ENCODE measurements at regions of chr6 and their contacts with region 1.

Region 1: GRCh38 chr6:24432611-24433010 is 29.9 kb downstream of the MRS2 start:
- DNase-seq: no peak
- H3K4me3 ChIP-seq: no peak overlapping the region
- H3K27ac ChIP-seq: no peak overlapping the region
- H3K4me1 ChIP-seq: no peaks in the 10 kb centered on the region
- H3K27me3 ChIP-seq: no peaks in the 10 kb centered on the region
- CTCF ChIP-seq: no peak
- POLR2A ChIP-seq: no peak

Region 2: DNA sequence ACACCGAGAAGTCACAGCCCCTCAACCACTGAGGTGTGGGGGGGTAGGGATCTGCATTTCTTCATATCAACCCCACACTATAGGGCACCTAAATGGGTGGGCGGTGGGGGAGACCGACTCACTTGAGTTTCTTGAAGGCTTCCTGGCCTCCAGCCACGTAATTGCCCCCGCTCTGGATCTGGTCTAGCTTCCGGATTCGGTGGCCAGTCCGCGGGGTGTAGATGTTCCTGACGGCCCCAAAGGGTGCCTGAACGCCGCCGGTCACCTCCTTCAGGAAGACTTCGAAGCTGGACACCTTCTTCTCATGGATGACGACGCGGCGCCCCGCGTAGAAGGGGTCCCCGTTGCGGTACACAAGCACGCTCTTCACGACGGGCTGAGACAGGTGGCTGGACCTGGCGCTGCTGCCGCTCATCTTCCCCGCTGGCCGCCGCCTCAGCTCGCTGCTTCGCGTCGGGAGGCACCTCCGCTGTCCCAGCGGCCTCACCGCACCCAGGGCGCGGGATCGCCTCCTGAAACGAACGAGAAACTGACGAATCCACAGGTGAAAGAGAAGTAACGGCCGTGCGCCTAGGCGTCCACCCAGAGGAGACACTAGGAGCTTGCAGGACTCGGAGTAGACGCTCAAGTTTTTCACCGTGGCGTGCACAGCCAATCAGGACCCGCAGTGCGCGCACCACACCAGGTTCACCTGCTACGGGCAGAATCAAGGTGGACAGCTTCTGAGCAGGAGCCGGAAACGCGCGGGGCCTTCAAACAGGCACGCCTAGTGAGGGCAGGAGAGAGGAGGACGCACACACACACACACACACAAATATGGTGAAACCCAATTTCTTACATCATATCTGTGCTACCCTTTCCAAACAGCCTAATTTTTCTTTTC is 75.0 kb before region 1 on chr6 and contains the start of gene DCDC2:
- intact Hi-C with region 1: no loop called
- DNase-seq: peak; percentile 77
- H3K4me3 ChIP-seq: peak within 1 kb of the TSS; percentile 6 to 24
- H3K27ac ChIP-seq: no peak within 1 kb of the TSS
- H3K4me1 ChIP-seq: peaks cover 4% of the 10 kb centered on the region
- H3K27me3 ChIP-seq: no peaks in the 10 kb centered on the region
- CTCF ChIP-seq: no peak
- POLR2A ChIP-seq: peak; percentile 33
- total RNA-seq, gene DCDC2: 0.34 to 2.5 TPM

Region 3: GRCh38 chr6:24458134-24458533 is 25.5 kb after region 1 on chr6:
- intact Hi-C with region 1: no loop called
- DNase-seq: no peak
- H3K4me3 ChIP-seq: no peak overlapping the region
- H3K27ac ChIP-seq: no peak overlapping the region
- H3K4me1 ChIP-seq: no peaks in the 10 kb centered on the region
- H3K27me3 ChIP-seq: no peaks in the 10 kb centered on the region
- CTCF ChIP-seq: no peak
- POLR2A ChIP-seq: no peak

Region 4: DNA sequence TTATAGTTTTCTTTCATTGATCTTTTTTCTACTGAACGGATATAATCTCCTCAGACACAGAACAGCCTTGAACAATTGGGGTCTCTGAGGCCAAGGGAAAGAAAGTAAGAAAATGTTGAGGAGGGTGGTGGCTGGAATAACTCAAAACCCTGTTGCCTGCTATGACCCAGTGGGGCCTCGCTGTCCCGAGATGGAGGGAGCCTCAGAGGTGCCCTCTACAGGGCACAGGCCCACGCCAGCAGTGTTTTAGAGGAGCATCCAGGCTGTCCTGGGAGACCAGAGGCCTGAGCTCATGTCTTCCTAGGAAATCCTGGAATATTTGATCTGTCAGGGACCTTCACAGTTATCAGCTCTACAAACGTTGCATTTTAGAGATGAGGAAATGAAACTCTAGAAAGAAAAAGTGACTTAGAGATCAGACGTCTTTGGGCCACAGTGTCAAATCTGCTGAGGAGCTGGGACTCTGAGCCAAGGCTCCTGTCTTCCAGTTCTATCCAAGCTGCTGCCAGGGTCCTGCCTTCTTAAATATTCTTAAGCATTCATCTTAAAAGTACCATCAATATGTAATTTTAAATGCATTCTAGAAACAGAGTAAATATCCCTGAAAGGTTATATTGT is 88.4 kb after region 1 on chr6:
- intact Hi-C with region 1: loop called (anchors 2 kb)
- DNase-seq: peak; percentile 26
- H3K4me3 ChIP-seq: no peak overlapping the region
- H3K27ac ChIP-seq: no peak overlapping the region
- H3K4me1 ChIP-seq: no peaks in the 10 kb centered on the region
- H3K27me3 ChIP-seq: no peaks in the 10 kb centered on the region
- CTCF ChIP-seq: peak in 3 of 4 experiments; percentile 11 to 51 (median 30)
- POLR2A ChIP-seq: no peak

Measured in prostate gland (tissue), 2 donors.